Activated B cell treated with CpG ODN at 0.5 μM for 24 hours (primary cell): ENCODE measurements at regions of chr22 and their contacts with region 1.

Region 1: DNA sequence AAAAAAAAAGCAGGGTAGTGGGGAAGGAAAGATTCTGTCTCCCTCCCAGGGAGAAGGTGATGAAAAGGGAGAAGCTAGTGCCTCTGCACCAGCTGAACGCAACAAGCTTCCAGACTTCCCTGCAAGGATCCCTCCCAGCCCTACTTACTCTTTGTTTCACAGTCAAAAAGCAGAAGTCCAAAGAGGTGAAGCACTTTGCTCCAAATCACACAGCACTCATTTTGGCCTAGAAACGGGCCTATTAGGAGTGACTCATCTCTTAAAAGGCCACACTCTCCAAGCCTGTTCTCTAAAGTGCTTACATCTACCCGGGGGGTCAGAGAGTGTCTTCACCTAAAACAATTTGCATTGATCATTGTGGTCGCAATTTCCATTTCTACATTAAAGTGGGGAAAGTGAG is 17.7 kb upstream of the GRK3 start:
- DNase-seq: no peak
- ATAC-seq: peak; percentile 55
- H3K4me3 Mint-ChIP-seq: no peak overlapping the region
- H3K27ac Mint-ChIP-seq: no peak overlapping the region
- H3K4me1 Mint-ChIP-seq: peaks cover 46% of the 10 kb centered on the region
- H3K27me3 Mint-ChIP-seq: no peaks in the 10 kb centered on the region
- CTCF ChIP-seq: no peak

Region 2: DNA sequence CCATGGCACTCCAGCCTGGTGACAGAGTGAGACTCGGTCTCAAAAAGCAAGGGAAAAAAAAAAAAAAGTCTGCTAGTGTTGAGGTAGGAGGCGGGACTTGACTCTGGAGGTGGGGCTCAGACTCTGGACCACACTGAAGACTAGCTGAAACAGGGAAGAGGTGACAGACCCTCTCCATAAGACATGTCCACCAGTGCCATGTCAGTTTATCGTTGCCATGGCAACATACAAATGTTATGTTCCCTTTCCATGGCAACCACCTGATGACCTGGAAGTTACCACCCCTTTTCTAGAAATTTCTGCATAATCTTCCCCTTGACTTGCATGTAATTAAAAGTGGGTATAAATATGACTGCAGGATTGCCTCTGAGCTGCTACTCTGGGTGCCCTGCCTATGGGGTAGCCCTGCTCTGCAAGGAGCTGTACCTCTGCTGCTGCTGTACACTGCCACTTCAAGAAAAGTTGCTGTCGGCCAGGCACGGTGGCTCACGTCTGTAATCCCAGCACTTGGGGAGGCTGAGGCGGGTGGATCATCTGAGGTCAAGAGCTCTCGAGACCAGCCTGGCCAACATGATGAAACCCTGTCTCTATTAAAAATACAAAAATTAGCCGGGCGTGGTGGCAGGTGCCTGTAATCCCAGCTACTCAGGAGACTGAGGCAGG is 539.2 kb before region 1 on chr22:
- CTCF ChIA-PET with region 1: no interaction called
- POLR2A ChIA-PET with region 1: no interaction called
- intact Hi-C with region 1: no loop called
- DNase-seq: no peak
- ATAC-seq: no peak
- H3K4me3 Mint-ChIP-seq: no peak overlapping the region
- H3K27ac Mint-ChIP-seq: no peak overlapping the region
- H3K4me1 Mint-ChIP-seq: no peaks in the 10 kb centered on the region
- H3K27me3 Mint-ChIP-seq: peaks cover 2% of the 10 kb centered on the region
- CTCF ChIP-seq: no peak

Region 3: DNA sequence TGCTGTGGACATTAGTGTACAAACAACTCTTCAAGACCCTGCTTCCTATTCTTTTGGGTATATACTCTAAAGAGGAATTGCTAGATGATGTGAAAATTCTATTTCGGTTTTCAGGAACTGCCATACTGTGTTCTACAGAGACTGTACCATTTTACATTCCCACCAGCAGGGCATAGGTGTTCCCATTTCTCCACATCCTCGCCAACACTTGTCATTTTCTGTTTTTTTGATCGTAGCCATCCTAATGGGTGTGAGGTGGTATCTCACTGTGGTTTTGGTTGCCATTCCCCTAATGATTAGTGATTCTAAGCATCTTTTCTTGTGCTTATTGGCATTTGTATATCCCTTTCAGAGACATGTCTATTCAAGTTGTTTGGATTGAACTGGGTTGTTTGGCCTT is 12.0 kb before region 1 on chr22:
- CTCF ChIA-PET with region 1: no interaction called
- POLR2A ChIA-PET with region 1: no interaction called
- intact Hi-C with region 1: no loop called
- DNase-seq: no peak
- ATAC-seq: no peak
- H3K4me3 Mint-ChIP-seq: no peak overlapping the region
- H3K27ac Mint-ChIP-seq: no peak overlapping the region
- H3K4me1 Mint-ChIP-seq: no peaks in the 10 kb centered on the region
- H3K27me3 Mint-ChIP-seq: peaks cover 2% of the 10 kb centered on the region
- CTCF ChIP-seq: no peak

Region 4: DNA sequence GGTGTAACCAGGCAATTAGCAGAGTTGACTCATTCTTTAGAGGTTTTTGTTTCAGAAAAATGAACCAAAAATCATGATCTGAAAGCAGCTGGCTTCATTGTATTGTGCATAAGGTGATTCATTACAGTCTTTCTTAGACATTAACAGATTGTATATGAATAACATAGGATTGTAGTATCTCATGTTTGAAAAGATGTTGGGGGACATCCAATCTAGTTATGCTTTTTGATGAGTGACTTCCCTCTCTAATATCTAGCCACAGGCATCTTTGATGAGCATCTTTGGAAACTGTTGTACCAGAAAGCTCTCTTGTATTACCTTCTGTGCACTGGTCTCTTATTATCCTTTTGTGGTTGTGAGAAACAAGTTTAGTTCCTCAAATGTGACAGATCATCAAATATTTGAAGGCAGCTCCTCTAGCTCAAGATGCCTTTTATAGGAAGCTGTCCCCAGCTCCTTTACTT is 26.0 kb after region 1 on chr22:
- CTCF ChIA-PET with region 1: interaction called, 68 read pairs
- POLR2A ChIA-PET with region 1: interaction called, 13 read pairs
- intact Hi-C with region 1: no loop called
- DNase-seq: no peak
- ATAC-seq: peak; percentile 63
- H3K4me3 Mint-ChIP-seq: peak overlapping the region; percentile 36
- H3K27ac Mint-ChIP-seq: peak overlapping the region; percentile 82
- H3K4me1 Mint-ChIP-seq: peaks cover 79% of the 10 kb centered on the region
- H3K27me3 Mint-ChIP-seq: no peaks in the 10 kb centered on the region
- CTCF ChIP-seq: no peak

Region 5: GRCh38 chr22:25656724-25657123 is 110.0 kb after region 1 on chr22:
- CTCF ChIA-PET with region 1: interaction called, 11 read pairs
- POLR2A ChIA-PET with region 1: interaction called, 5 read pairs
- intact Hi-C with region 1: loop called (anchors 5 kb)
- DNase-seq: peak; percentile 23
- ATAC-seq: peak; percentile 99
- H3K4me3 Mint-ChIP-seq: peak overlapping the region; percentile 42
- H3K27ac Mint-ChIP-seq: peak overlapping the region; percentile 72
- H3K4me1 Mint-ChIP-seq: peaks cover 81% of the 10 kb centered on the region
- H3K27me3 Mint-ChIP-seq: no peaks in the 10 kb centered on the region
- CTCF ChIP-seq: no peak

Region 6: GRCh38 chr22:25736378-25737011 is 189.7 kb after region 1 on chr22:
- CTCF ChIA-PET with region 1: no interaction called
- POLR2A ChIA-PET with region 1: interaction called, 11 read pairs
- intact Hi-C with region 1: no loop called
- DNase-seq: no peak
- ATAC-seq: no peak
- H3K4me3 Mint-ChIP-seq: no peak overlapping the region
- H3K27ac Mint-ChIP-seq: no peak overlapping the region
- H3K4me1 Mint-ChIP-seq: peaks cover 9% of the 10 kb centered on the region
- H3K27me3 Mint-ChIP-seq: peaks cover 17% of the 10 kb centered on the region
- CTCF ChIP-seq: no peak

Region 7: DNA sequence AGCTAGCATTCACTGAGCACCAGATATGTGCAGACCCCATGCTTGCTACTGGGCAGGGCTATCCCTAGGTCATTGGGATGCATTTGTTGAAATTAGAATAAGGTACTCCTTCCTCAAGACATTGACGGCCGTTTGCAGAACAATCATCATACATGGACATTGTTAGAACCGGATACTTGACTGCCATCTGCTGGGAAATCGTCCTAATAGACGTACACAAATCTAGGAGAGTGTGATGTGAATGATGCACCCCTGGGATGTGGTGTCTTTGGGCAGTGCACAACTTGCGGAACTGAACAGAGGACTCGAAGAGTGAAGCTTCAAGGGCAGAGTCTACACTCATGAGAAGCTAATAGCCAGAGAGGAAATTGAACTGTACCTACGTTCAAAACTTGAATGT is 231.1 kb after region 1 on chr22:
- CTCF ChIA-PET with region 1: interaction called, 19 read pairs
- POLR2A ChIA-PET with region 1: no interaction called
- intact Hi-C with region 1: loop called (anchors 1 kb)
- DNase-seq: no peak
- ATAC-seq: no peak
- H3K4me3 Mint-ChIP-seq: no peak overlapping the region
- H3K27ac Mint-ChIP-seq: no peak overlapping the region
- H3K4me1 Mint-ChIP-seq: peaks cover 3% of the 10 kb centered on the region
- H3K27me3 Mint-ChIP-seq: peaks cover 6% of the 10 kb centered on the region
- CTCF ChIP-seq: no peak